ENCODE measurements at regions of chr10 and their contacts with region 1.

Region 1: GRCh38 chr10:53298443-53298842 is 525.9 kb upstream of the MBL2 start:
- DNase-seq: no peak
- H3K27ac ChIP-seq: no peak overlapping the region
- CTCF ChIP-seq: no peak

Region 2: DNA sequence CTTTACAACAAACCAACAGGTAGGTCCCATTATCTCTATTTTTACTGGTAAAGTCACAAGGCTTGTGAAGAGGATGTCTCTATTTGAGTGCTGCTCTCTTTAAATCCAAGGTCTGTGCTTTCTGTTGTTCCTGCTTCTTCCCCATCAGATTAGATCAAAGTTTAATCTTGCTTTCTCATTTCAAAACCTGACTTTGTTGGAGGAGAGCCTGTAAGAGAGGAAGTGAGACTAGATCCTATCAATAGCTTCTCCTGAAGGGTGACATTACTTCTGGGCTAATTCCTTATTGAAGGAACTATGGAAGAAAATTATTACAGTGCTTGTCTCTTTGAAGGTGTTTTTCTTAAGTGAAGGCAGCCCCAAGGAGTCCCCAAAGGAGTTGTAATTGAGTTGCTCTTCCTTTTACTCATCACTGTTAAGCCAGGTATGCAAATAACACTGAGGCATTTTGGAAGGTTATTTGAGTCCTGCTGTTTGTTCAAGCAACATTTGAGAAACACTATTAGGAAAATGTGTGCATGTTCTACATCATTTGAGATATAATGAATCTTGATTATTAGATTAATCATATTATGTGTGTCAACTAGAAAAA is 379.6 kb before region 1 on chr10:
- CTCF ChIA-PET with region 1: interaction called, 11 read pairs
- POLR2A ChIA-PET with region 1: no interaction called
- DNase-seq: no peak
- H3K27ac ChIP-seq: no peak overlapping the region
- CTCF ChIP-seq: no peak

Region 3: DNA sequence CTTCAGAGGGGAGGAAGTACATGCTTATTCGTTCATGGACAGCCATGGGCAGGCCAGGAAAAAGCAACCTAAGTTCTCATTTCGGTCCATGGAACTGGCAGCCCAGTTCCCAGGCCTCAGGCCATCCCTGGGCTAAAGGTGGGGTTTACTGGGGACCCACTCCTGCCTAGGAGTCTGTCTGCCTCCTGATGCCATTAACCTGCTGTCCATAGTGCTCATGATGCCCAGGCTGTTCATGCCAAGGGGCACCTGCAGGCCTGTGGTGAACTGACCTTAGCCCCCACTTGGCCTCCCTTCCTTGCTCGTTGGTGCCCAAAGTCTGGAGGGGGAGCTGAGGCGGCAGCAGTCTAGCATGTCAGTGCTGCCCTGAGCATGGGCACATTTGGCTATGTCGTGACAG is 75.6 kb before region 1 on chr10:
- CTCF ChIA-PET with region 1: no interaction called
- POLR2A ChIA-PET with region 1: no interaction called
- DNase-seq: no peak
- H3K27ac ChIP-seq: no peak overlapping the region
- CTCF ChIP-seq: no peak